Activated CD4-positive, alpha-beta T cell treated with anti-CD3 and anti-CD28 coated beads, Interleukin-2, amount 10 ng/mL, durations not matched to agents 24 days and 14 days (primary cell): ENCODE measurements at regions of chr5 and their contacts with region 1.

Region 1: DNA sequence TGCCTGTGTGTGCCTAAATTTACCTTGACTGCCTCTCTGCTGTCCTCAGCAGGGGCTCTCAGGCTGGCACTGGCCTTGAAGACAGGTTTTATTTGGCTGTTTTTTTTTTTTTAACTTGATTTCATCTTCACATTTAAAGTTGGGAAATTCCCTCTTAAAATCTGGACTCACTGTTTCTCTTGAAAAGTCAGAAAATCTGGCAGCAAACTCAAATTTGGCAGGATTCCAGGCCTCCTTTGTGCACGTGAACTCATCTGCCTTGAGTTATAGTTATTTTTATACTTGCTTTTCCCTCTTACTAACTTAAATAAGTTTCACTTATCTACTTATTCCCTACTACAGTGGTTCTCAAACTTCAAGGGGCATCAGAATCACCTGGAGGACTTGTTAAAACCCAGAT is 118.4 kb upstream of the MAP3K1 start:
- DNase-seq: no peak
- H3K4me3 Mint-ChIP-seq: no peak overlapping the region
- H3K27ac Mint-ChIP-seq: no peak overlapping the region
- H3K4me1 Mint-ChIP-seq: peaks cover 77% of the 10 kb centered on the region
- H3K27me3 Mint-ChIP-seq: no peaks in the 10 kb centered on the region

Region 2: DNA sequence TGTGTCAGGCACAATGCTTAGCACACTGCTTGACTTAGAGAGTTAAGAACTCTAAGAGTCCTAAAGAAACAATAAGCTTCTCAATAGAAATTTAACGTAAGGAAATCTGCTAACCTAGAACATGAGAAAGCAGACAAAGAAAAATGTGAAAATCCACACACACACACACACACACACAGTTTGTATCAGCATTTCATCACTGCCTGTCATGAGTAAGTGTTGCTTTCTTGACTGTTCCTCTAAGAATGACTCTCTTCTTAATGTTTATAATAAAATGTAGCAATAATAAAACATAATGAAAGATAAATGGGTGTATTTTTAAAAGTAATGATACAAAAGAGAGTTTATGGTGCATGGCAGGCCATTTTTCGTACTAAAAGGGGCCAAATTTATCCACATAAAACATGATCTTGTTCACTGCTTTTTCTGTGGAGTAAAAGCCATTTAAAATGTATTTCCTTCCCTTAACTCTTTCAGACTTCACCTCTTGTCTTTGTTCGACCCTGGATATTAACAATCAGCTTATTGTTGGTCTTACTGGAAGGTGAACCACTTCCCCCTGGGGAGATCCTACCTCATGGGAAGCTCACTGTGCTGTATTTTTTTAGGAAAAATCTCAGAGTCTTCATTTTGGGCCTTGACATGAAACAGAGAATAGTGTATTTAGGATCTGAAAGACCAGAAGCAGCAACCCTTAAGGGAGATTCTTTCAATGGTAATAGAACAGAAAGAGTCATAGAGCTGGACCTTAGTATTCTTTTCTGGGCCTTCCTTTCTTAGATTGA is 356.5 kb before region 1 on chr5:
- intact Hi-C with region 1: no loop called
- DNase-seq: no peak
- H3K4me3 Mint-ChIP-seq: no peak overlapping the region
- H3K27ac Mint-ChIP-seq: no peak overlapping the region
- H3K4me1 Mint-ChIP-seq: peaks cover 14% of the 10 kb centered on the region
- H3K27me3 Mint-ChIP-seq: no peaks in the 10 kb centered on the region

Region 3: DNA sequence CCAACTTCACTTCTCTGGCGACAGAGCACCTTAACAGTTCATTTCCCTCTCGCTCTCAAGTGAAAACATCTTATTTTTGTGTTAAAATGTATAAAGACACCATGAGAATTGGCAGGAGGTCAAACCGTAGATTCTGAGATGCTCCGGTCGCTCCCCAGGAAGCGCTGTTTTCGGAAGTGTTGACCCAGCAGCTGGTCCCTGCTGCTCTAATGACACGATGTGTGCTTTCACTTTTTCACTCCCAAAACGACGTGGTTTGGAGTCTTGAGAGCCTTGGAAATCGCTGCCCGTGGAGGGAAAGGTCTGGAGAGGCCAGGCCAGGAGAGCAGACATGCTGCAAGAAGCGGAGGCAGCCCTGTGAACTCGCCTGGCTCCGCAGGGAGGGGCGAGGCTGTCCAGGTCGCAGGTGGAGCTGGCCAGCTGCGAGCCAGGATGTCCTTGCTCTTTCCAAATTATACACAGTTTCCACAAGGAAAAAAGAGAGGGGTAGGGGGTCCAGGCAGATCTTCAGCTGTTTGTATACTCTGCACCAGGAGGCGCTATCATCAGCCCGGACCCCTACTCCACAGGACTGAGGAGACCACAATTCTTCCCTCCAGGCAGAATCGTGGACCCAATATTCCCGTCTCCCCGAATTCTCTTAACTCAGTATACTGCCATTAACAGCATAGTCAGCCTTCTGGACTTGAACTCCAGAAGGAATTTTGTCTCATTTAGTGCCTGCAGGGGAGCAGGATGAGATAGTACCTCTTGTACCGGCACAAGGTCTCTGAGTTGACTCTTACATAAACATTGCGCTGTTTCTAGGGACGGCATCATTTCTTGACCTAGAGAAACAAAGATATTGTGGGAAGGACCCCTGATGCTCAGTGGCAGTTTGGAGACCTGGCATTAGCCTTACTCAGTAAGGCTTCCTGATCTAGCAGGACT is 215.2 kb before region 1 on chr5:
- intact Hi-C with region 1: loop called (anchors 2 kb)
- DNase-seq: peak; percentile 78
- H3K4me3 Mint-ChIP-seq: peak overlapping the region; percentile 86
- H3K27ac Mint-ChIP-seq: peak overlapping the region; percentile 91
- H3K4me1 Mint-ChIP-seq: peaks cover 38% of the 10 kb centered on the region
- H3K27me3 Mint-ChIP-seq: no peaks in the 10 kb centered on the region

Region 4: DNA sequence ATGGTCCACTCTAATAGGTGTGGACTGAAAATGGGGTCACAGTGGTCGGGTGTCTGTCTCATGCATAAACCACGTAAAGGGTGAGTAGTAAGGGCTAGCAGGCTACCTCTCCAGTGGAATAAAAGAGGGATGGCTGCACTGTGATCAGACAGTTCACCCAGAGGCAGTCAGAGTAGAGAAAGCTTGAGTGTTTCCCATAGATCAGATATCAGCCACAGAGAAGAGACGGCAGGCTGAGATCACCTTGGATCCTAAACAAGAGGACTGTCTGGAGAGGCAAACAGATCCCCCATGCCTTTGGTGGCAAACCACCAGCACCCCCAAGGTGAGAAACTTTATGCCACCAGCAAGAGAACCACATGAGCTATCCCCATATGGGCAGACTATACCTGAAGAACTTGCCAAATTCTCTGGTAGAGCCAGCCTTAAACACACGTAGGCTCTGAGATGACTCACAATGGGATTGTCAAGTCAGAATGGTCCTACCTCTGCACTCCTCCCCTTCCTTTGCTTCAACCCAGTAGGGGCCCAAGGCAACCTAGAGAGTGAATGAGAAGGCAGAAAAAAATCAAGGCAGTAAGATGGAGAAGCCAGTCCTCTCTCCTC is 86.7 kb before region 1 on chr5:
- intact Hi-C with region 1: loop called (anchors 2 kb)
- DNase-seq: peak; percentile 79
- H3K4me3 Mint-ChIP-seq: peak overlapping the region; percentile 50
- H3K27ac Mint-ChIP-seq: peak overlapping the region; percentile 80
- H3K4me1 Mint-ChIP-seq: peaks cover 79% of the 10 kb centered on the region
- H3K27me3 Mint-ChIP-seq: no peaks in the 10 kb centered on the region

Region 5: DNA sequence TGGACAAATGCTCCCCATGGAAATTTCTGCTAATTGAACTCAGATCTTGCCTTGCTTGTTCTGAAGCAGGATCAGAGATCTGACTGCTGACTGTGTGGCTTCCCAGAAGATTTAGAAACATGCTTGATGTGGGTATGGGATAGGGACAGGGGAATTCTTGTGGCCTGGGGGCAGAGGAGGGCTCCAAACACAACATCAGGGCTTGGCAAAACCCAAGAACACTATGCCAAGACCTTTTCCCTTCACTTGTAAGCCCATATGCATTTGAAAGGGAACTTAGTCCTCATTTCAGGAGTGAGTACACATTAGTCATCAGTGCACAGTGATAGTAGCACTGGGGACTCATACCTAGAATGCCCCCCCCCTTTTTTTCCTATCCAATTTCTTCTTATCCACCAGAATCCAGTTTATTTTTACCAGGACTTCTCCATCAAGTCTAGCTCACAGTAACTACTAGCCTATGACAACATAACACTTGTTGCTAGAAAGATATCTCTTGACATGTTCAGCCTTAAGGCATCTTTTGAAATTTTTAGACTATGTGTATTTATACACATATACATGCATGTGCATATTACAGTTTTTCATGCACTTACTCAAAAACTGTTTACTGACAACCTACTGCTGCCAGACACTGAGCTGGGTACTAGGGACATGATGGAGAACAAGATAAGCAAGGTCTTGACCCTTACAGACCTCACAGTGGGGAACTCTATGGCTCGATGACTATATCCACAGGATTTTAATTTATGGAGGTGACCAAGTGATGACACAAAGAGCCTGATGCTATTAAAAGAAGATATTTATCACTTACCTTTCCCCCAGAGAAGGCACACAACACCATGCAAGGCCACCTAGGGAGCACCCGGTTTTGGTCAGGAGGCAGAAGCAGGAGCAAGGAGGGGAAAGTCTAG is 39.8 kb before region 1 on chr5:
- intact Hi-C with region 1: loop called (anchors 5 kb)
- DNase-seq: no peak
- H3K4me3 Mint-ChIP-seq: no peak overlapping the region
- H3K27ac Mint-ChIP-seq: no peak overlapping the region
- H3K4me1 Mint-ChIP-seq: peaks cover 14% of the 10 kb centered on the region
- H3K27me3 Mint-ChIP-seq: peaks cover 14% of the 10 kb centered on the region

Region 6: DNA sequence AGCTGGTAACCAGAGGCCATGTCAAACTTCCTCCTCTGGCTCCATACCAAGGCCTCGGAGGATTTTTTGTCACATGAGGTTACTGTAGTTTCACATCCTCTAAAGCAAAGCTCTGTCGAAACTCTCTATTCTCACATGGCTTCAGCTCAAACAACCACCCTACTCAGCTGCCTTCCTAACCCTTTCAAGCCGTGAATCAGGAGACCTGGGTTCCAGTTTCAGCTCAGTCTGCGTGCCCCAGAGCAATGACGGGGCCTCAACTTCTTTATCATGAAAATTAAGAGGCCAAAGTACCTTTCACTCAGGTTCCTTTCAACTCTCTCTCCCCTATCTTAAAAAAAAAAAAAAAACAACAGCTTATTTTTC is 26.8 kb before region 1 on chr5:
- intact Hi-C with region 1: loop called (anchors 2 kb)
- DNase-seq: peak; percentile 86
- H3K4me3 Mint-ChIP-seq: peak overlapping the region; percentile 13
- H3K27ac Mint-ChIP-seq: peak overlapping the region; percentile 67
- H3K4me1 Mint-ChIP-seq: peaks cover 36% of the 10 kb centered on the region
- H3K27me3 Mint-ChIP-seq: peaks cover 6% of the 10 kb centered on the region

Region 7: DNA sequence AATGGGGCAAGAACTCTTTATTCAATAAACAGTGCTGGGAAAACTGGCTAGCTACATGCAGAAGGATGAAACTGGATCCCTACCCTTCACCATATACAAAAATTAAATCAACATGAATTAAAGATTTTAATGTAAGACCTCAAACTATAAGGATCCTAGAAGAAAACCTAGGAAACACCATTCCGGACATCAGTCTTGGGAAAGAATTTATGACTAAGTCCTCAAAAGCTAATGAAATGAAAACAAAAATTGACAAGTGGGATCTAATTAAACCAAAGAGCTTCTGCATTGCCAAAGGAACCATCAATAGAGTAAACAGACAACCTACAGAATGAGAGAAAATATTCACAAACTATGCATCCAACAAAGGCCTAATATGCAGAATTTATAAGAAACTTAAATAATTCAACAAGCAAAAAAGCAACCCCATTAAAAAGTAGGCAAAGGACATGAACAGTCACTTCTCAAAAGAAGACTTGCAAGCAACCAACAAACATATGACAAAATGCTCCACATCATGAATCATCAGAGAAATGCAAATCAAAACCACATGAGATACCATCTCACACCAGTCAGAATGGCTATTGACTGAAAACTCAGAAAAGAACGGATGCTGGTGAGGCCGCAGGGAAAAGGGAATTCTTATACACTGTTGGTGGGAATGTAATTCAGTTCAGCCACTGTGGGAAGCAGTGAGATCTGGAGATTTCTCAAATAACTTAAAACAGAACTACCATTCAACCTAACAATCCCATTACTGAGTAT is 14.1 kb after region 1 on chr5:
- intact Hi-C with region 1: loop called (anchors 2 kb)
- DNase-seq: peak; percentile 70
- H3K4me3 Mint-ChIP-seq: no peak overlapping the region
- H3K27ac Mint-ChIP-seq: no peak overlapping the region
- H3K4me1 Mint-ChIP-seq: peaks cover 15% of the 10 kb centered on the region
- H3K27me3 Mint-ChIP-seq: peaks cover 12% of the 10 kb centered on the region

Region 8: DNA sequence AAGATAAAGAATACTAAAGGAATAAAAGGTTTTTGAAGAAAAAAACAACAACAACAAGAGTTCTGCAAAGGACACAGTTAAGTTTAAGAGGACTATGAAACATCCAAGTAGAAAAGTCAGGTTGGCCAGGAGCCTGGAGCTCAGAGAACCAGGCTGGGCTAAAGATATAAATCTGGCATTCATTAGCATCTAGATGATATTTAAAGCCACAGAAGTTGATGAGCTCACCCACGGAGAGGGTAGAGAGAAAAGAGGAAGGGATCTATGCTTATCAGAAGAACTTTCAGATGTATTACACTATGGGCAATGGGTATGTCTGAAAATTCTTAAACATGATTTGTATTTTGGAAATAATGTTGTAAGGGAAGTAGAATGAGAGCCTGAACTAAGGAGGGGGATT is 245.1 kb after region 1 on chr5:
- intact Hi-C with region 1: no loop called
- DNase-seq: no peak
- H3K4me3 Mint-ChIP-seq: no peak overlapping the region
- H3K27ac Mint-ChIP-seq: no peak overlapping the region
- H3K4me1 Mint-ChIP-seq: peaks cover 10% of the 10 kb centered on the region
- H3K27me3 Mint-ChIP-seq: no peaks in the 10 kb centered on the region

Region 9: DNA sequence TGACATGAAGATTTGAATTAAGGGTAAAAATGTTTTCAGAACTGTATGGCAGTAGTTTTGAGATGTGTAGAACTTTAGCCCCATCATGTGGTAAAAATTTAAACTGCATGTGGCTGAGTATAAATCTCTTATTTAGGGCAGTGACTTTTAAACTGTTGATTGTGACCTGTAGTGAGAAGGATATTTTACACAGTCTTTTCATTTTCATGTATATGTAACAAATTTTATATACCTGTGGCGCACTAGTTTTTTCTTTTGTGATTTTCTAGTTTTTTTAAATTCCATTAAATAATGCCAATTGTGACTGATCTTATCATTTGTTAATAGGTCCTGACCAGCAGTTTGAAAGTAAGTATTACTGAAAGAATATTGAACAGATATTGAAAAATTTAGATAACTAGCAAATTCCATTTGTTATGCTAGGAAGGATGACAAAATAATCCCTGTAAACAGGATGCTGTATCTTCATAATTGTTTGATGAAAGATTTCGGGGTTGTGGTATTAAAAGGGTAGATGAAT is 524.2 kb after region 1 on chr5:
- intact Hi-C with region 1: no loop called
- DNase-seq: peak; percentile 86
- H3K4me3 Mint-ChIP-seq: no peak overlapping the region
- H3K27ac Mint-ChIP-seq: peak overlapping the region; percentile 2
- H3K4me1 Mint-ChIP-seq: peaks cover 21% of the 10 kb centered on the region
- H3K27me3 Mint-ChIP-seq: no peaks in the 10 kb centered on the region

Region 10: DNA sequence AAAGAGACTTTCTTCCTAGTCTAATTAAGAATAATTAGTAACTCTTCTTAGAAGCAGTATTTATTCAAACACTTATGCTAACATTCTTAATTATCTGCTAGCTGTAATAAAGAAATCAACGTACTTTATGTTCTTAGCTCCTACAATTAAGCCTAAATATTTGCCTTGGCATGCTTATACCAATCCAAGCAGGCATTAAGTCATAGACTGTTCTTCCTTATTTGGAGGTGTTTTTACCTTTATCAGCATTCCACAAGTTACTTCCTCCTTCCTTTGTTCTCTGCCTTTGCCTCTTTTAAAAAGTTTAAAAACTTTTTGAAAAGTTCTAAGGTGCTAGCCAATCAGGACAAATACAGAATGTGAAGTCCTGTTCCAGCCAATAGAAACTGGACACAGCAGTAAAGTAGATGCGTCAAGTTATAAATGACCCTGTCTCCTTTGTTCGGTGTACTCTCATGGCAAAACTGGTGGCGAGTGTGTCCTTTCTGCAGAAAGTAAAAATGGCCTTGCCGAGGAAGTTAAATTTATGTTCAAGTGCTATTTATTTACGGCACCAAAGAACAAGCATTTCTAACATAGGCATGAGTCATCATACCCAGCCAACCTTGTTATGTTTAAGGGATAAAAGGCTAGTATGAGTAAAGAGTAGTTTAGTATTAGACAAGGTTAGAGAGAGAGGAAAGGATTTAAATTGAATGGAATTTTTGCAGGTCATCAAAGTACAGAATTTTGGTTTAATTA is 535.6 kb after region 1 on chr5:
- intact Hi-C with region 1: no loop called
- DNase-seq: peak; percentile 40
- H3K4me3 Mint-ChIP-seq: no peak overlapping the region
- H3K27ac Mint-ChIP-seq: peak overlapping the region; percentile 74
- H3K4me1 Mint-ChIP-seq: peaks cover 25% of the 10 kb centered on the region
- H3K27me3 Mint-ChIP-seq: no peaks in the 10 kb centered on the region